SK-N-SH (cell line): ENCODE measurements at regions of chr19 and their contacts with region 1.

Region 1: GRCh38 chr19:10388957-10389356 is 8.6 kb upstream of the TYK2 start:
- DNase-seq: peak; percentile 76
- H3K4me3 ChIP-seq: peak overlapping the region in 1 of 2 experiments; percentile 36; a peak in 1 of 4 replicates
- H3K27ac ChIP-seq: no peak overlapping the region
- H3K4me1 ChIP-seq: no peaks in the 10 kb centered on the region
- H3K27me3 ChIP-seq: no peaks in the 10 kb centered on the region
- CTCF ChIP-seq: peak; percentile 96
- EP300 ChIP-seq: no peak
- RAD21 ChIP-seq: peak; percentile 84

Region 2: DNA sequence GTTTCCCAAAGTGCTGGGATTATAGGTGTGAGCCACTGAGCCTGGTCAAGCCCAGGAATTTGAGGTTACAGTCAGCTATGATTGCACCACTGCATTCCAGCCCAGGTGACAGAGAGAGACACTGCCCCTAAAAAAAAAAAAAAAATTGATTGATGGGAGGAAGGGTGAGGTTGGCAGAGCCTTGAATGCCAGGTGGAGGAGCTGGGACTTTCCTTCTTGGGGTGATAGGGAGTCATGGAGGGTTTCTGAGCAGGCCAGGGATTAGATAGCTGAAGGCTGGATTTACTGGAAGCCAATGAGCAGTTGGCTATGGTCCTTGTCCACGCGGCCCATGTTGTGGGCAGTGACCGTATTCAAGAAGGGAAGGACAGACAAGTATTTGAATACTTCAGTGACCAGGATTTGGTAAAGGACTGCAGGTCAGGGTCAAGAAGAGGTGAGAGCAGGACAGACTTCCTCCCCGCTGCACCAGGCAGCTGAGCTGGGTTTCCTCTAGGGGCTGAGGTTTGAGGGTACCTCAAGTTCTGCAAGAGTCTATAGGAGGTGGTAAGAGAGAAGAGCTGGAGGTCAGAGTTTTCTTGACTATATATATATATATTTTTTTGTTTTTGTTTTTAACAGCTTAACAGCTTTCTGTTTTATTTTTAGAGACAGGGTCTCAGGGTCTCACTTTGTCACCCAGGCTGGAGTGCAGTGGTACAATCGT is 109.1 kb before region 1 on chr19:
- CTCF ChIA-PET with region 1: interaction called, 11 read pairs
- POLR2A ChIA-PET with region 1: no interaction called
- DNase-seq: no peak
- H3K4me3 ChIP-seq: no peak overlapping the region
- H3K27ac ChIP-seq: no peak overlapping the region
- H3K4me1 ChIP-seq: no peaks in the 10 kb centered on the region
- H3K27me3 ChIP-seq: no peaks in the 10 kb centered on the region
- CTCF ChIP-seq: no peak
- EP300 ChIP-seq: no peak
- RAD21 ChIP-seq: no peak

Region 3: DNA sequence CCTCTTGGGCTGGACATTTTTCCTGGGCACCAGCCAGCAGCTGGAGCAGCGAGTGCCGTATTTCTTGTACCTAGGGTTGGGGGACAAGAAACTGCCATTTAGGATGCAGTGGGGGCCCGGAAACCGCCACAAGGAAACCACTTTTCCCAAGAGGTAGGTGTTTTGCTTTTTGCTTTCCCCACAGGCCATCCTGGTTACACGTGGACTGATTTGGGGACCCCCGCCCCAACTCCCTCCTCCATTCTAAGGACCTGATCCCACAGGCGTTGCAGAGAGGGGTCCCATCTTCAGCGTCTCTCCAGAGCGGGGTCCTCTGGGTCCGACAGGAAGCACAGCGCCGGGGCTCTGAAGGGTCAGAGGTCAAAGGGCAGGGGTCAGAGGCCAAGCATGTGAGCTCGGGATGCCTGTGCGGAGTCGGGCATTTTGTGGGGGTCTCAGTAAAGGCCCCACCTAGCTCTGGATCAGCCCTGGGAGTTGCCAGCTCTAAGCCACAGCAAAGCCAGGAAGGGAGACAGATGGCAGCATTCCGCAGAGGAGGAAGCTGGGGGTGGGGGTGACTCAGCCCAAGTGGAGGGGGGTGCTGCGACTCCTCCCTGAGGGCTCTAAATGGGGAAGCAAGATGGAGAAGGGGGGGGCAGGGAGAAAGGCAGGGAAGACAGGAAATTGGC is 83.7 kb before region 1 on chr19:
- CTCF ChIA-PET with region 1: interaction called, 10 read pairs
- POLR2A ChIA-PET with region 1: no interaction called
- DNase-seq: no peak
- H3K4me3 ChIP-seq: no peak overlapping the region
- H3K27ac ChIP-seq: no peak overlapping the region
- H3K4me1 ChIP-seq: no peaks in the 10 kb centered on the region
- H3K27me3 ChIP-seq: no peaks in the 10 kb centered on the region
- CTCF ChIP-seq: no peak
- EP300 ChIP-seq: no peak
- RAD21 ChIP-seq: no peak

Region 4: DNA sequence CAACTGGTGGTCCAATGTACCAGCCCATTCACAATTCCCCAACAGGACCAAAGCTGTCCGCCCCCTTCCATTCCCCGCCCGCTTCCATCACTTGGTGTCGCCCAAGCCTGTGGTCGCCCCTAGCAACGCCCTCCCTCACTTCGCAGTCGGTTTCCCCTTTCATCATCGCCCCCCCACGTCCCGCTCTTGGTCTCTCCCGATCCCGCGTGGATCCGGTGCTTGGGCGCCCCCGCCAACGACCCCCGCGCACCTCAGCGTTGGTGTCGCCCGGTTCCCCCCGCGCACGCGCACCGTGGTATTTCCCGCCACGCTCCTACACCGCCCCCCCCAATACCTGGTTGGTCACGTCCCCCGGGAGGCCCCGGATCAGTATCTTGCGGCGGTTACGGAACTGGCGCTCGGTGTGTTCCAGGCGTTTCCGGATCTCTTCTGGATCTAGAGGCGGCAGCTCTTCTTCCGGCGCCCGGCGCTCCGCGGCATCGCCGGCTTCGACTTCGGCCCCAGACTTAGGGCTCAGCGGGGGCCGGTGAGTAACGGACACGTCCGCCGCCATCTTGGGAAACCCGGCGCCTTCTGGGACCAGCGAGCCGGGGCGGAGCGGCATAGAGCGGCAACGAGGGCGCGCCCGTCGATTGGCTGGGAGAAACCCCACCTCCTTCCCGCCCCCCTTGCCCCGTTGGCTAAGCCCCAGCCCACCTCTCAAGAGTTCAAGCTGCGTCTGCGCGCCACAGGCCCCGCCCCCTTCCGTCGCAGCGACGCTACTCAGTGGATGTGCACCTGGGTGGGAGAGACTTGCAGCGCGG is 55.8 kb before region 1 on chr19 and contains the start of gene RAVER1:
- CTCF ChIA-PET with region 1: interaction called, 18 read pairs
- POLR2A ChIA-PET with region 1: no interaction called
- DNase-seq: peak; percentile 99
- H3K4me3 ChIP-seq: peak within 1 kb of the TSS; percentile 81 to 95
- H3K27ac ChIP-seq: peak within 1 kb of the TSS; percentile 93 to 97
- H3K4me1 ChIP-seq: peaks cover 0 to 22% of the 10 kb centered on the region in 2 experiments; a peak in 1 of 4 replicates
- H3K27me3 ChIP-seq: no peaks in the 10 kb centered on the region
- CTCF ChIP-seq: no peak
- EP300 ChIP-seq: no peak
- RAD21 ChIP-seq: no peak
- polyA plus RNA-seq, gene RAVER1: 3.0 and 8.2 TPM in 2 replicates

Region 5: DNA sequence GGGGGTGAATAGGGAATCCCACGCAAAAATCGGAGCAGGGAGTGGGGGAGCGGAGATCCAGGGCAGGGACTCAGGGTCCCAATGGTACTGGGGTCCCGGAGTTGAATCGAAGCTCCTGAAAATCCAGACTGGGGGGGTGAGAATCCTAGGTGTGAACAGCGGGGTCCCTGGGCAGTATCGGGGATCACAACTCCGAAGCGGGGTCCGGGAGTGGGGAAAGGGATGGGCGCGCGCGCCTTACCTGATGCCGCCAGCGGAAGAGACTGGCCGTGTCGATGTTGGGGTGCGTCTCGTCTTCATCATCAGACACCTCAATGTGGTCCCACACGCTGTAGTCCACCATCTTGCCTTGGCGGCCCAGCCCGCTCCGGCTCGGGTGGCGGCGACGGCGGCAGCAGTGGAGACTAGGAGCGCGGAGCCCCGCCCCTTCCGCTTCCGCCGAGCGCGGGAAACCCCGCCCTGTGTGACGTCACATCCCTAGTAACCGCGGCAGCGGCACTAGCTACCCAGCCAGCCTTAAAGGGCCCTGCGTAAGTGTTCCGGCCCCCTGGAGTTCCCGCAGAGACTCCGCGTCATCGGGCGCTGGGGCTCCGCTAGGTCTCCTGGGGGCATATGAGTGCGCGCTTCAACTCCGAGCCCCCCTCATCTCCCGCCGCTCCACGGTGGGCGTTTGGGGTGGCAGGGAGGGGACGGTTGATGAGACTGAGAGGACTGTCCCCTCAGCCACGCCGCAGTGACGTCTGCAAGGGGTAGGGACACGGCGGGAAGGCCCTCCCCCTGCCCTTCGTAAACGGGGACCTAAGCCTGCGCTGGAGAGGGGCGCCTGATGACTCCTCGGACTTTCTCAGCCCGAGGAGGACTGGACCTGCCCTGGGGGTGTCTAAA is 14.4 kb after region 1 on chr19 and contains the start of gene CDC37:
- CTCF ChIA-PET with region 1: interaction called, 51 read pairs
- POLR2A ChIA-PET with region 1: no interaction called
- DNase-seq: peak; percentile 98
- H3K4me3 ChIP-seq: peak within 1 kb of the TSS; percentile 89 to 98
- H3K27ac ChIP-seq: peak within 1 kb of the TSS; percentile 75 to 80
- H3K4me1 ChIP-seq: peaks cover 9 to 15% of the 10 kb centered on the region in 2 experiments; a peak in 3 of 4 replicates
- H3K27me3 ChIP-seq: no peaks in the 10 kb centered on the region
- CTCF ChIP-seq: no peak
- EP300 ChIP-seq: no peak
- RAD21 ChIP-seq: no peak
- polyA plus RNA-seq, gene CDC37: 1,026 and 1,054 TPM in 2 replicates

Region 6: DNA sequence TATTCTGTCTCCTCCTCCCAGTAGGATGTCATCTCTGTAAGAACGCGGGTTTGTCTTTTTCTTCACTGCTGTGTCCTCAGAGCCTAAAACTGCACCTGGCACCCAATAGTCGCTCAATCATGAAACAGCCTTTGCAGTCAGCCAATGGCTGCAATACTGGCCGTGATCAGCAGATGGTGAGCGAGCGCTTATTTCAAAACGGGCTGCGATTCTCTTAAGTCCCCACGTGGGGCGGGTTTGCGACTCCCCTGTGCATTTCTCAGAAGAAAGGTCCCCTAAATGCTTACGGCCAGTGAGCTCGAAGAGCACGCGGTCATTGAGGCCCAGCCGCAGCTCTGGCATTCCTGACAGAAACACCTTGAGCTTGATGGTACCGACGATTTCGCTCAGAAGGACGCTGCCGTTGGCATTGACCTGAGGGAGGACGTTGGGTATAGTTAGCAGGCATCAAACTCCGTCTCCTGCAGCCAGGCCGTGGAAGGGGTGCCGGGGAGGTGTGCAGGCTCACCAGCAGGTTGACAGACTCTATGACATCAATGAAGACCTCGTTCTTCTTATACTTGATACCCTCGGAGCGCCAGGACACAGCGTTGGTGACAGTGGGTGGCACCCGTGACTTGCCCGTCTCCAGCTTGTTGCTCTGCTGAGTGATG is 192.1 kb after region 1 on chr19:
- CTCF ChIA-PET with region 1: no interaction called
- POLR2A ChIA-PET with region 1: no interaction called
- DNase-seq: peak; percentile 86
- H3K4me3 ChIP-seq: peak overlapping the region in 1 of 2 experiments; percentile 6; a peak in 1 of 4 replicates
- H3K27ac ChIP-seq: no peak overlapping the region
- H3K4me1 ChIP-seq: peaks cover 0 to 3% of the 10 kb centered on the region in 2 experiments; a peak in 1 of 4 replicates
- H3K27me3 ChIP-seq: no peaks in the 10 kb centered on the region
- CTCF ChIP-seq: peak; percentile 97
- EP300 ChIP-seq: no peak
- RAD21 ChIP-seq: peak; percentile 98